BJ (cell line): ENCODE measurements at regions of chr3 and their contacts with region 1.

Region 1: DNA sequence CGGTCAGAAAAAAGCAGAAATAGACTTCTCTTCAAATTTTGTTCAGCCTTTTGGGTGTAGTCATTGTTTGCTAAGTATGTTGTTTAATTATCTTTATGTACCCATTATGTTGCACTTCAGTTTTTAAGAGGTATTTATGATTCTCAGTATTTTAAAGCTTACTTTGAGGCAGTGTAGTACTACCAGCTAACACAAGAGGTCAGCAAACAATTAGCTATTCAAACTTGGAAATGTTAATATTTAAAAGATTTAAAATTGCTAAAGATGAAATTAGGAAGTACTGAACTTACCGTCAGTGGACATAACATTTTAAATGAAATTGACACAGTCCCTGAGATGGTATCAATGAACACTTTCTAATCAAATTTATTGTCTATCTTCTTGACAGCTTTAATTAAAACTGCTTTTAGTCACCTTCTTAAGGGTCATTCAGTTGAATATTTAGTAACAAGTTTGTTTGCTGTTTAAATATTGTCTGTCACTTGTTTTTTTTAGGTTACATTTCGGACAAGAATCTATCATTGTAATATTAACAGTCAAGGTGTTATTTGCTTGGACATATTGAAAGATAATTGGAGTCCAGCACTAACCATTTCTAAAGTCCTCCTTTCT is 28.1 kb downstream of the NKIRAS1 start:
- DNase-seq: no peak
- H3K4me3 ChIP-seq: no peak overlapping the region
- H3K27me3 ChIP-seq: no peaks in the 10 kb centered on the region
- CTCF ChIP-seq: peak; percentile 72

Region 2: GRCh38 chr3:23877329-23877980 is 11.3 kb before region 1 on chr3:
- CTCF ChIA-PET with region 1: interaction called, 19 read pairs
- POLR2A ChIA-PET with region 1: interaction called, 3 read pairs
- DNase-seq: peak; percentile 66
- H3K4me3 ChIP-seq: no peak overlapping the region
- H3K27me3 ChIP-seq: no peaks in the 10 kb centered on the region
- CTCF ChIP-seq: no peak

Region 3: DNA sequence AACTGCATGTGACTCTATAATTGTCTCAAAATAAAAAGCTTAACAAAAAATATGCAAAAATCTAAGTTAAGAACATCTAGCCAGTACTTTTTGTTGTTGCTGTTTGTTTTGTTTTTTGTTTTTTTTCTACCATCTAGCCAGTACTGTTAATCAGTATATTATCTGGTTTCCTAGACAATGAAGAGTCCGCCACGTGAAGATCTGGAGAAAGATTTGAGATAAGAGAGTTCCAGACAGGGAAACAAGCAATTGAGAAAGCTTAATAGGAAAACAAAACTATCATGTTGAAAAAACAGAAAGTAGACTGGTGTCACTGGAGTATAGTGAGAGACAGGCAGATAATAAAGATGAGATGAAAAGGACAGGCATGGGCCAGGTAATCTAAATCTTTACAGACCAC is 10.6 kb after region 1 on chr3:
- CTCF ChIA-PET with region 1: interaction called, 14 read pairs
- POLR2A ChIA-PET with region 1: no interaction called
- DNase-seq: no peak
- H3K4me3 ChIP-seq: no peak overlapping the region
- H3K27me3 ChIP-seq: no peaks in the 10 kb centered on the region
- CTCF ChIP-seq: no peak